GM23248 (cell line): ENCODE measurements at regions of chr2 and their contacts with region 1.

Region 1: DNA sequence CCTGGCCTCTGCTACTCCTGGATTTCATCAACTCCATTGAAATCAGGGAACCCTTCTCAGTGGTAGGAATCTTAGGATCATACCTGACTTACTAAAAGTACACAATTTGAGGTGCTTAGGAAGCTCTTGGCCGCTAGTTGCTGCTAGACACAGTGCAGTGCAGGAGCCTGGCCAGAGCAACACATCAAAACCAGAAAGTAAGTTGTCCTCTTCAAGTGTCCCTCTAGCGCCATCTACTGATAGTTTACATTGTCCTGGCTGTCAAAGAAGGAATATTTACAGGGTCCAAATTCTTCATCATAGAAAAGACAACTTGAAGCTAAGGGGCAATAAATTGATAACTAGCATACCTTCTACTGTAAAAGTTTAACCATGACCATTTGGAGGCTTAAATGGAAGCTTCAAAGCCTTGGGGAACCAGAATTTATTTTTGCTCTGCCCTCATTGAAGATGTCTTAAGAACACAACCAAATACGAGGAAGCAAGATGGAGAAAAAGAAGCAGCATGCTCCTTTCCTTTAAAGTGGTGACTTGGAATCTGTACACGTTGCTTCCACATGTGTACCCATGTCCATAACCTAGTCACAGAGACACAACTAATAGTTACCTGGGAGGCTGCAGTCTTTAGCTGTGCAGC is 889.1 kb upstream of the GCFC2 start:
- DNase-seq: peak; percentile 84
- H3K4me3 ChIP-seq: no peak overlapping the region
- H3K27ac ChIP-seq: no peak overlapping the region
- H3K4me1 ChIP-seq: no peaks in the 10 kb centered on the region
- H3K27me3 ChIP-seq: no peaks in the 10 kb centered on the region

Region 2: GRCh38 chr2:75787532-75788132 is 812.2 kb before region 1 on chr2:
- in situ Hi-C with region 1: loop called (anchors 25 kb)
- DNase-seq: peak; percentile 59
- H3K4me3 ChIP-seq: no peak overlapping the region
- H3K27ac ChIP-seq: no peak overlapping the region
- H3K4me1 ChIP-seq: no peaks in the 10 kb centered on the region
- H3K27me3 ChIP-seq: peaks cover 7% of the 10 kb centered on the region; the same call in 1 of the 2 replicates